B cell (primary cell): ENCODE measurements at regions of chr12 and their contacts with region 1.

Region 1: GRCh38 chr12:49776413-49776812 is 35.1 kb downstream of the TMBIM6 start:
- DNase-seq: peak; percentile 63
- ATAC-seq: peak; percentile 73
- H3K4me3 ChIP-seq: no peak overlapping the region
- H3K4me3 Mint-ChIP-seq: no peak overlapping the region
- H3K27ac ChIP-seq: no peak overlapping the region
- H3K27ac Mint-ChIP-seq: no peak overlapping the region
- H3K4me1 ChIP-seq: peaks cover 0 to 10% of the 10 kb centered on the region in 2 donors
- H3K4me1 Mint-ChIP-seq: peaks cover 11% of the 10 kb centered on the region
- H3K27me3 ChIP-seq: peaks cover 0 to 16% (median 5%) of the 10 kb centered on the region in 4 experiments
- H3K27me3 Mint-ChIP-seq: peaks cover 27% of the 10 kb centered on the region
- CTCF ChIP-seq: peak; percentile 70

Region 2: DNA sequence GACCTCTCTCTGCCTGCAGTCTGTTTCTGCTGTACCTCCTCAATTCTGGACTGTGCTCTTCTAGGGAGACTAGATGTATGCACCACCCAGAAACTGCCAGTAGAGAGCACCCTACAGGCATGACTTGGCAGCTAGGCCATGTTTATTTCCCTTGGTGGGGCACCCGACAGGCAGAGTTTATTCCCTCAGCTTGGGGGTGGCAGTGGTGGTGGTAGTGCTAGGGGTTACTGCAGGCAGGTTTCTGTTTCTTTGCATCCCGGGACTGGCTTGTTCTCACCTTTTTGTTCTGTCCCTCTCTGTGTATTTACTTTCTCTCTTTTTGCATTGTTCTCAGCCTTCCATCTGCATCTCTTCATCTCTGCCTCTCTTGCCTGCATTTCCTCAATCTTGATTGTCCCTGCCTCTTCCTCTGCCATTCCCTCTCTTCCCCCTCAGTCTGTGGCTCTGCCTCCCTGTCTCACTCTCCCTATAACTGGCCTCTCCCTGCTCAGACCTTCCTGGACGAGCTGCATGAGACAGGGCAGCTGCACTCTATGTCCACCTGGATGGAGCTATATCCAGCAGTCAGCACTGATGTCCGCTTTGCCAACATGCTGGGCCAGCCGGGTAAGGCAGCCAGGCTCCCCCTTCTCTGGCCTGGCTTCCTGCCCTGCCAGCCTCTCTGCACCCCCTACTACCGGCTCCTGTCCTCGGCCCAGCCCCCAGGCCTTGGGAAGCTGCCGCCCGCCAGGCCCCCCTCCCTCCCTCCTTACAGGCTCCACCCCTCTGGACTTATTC is 139.2 kb before region 1 on chr12:
- CTCF ChIA-PET with region 1: interaction called, 27 read pairs
- POLR2A ChIA-PET with region 1: no interaction called
- intact Hi-C with region 1: no loop called
- DNase-seq: peak; percentile 67
- ATAC-seq: peak; percentile 92
- H3K4me3 ChIP-seq: no peak overlapping the region
- H3K4me3 Mint-ChIP-seq: no peak overlapping the region
- H3K27ac ChIP-seq: no peak overlapping the region
- H3K27ac Mint-ChIP-seq: peak overlapping the region; percentile 67
- H3K4me1 ChIP-seq: peaks cover 13 to 18% of the 10 kb centered on the region in 2 donors
- H3K4me1 Mint-ChIP-seq: peaks cover 21% of the 10 kb centered on the region
- H3K27me3 ChIP-seq: no peaks in the 10 kb centered on the region
- H3K27me3 Mint-ChIP-seq: no peaks in the 10 kb centered on the region
- CTCF ChIP-seq: peak; percentile 77

Region 3: DNA sequence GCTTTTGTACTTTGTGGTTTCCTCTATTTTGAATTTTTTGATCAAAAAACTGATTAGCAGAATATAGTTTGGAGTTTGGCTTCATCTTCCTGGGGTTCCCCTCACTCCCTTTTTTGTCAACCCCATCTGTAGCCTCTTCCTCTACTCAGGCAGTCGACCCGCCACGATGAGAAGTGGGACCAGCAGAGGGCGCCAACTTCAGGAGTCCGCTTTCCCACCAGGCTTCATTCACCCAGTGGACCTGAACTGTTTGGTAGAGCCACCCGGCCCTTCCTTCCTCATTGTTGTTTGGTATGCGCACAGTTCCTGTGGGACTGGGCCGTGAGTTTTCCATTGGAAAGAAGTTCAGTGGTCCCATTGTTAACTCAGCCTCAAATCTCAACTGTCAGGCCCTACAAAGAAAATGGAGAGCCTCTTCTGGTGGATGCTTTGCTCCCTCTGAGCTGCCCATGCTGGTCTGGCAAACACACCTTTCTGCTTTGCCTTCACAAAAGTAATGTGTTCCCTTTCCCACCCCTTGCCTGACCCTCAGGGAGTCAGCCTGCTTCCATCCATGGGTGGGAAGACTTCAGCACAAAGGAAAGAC is 13.3 kb before region 1 on chr12:
- CTCF ChIA-PET with region 1: interaction called, 14 read pairs
- POLR2A ChIA-PET with region 1: no interaction called
- intact Hi-C with region 1: no loop called
- DNase-seq: peak; percentile 81
- ATAC-seq: peak; percentile 85
- H3K4me3 ChIP-seq: no peak overlapping the region
- H3K4me3 Mint-ChIP-seq: no peak overlapping the region
- H3K27ac ChIP-seq: peak overlapping the region in 1 of 2 donors; percentile 50
- H3K27ac Mint-ChIP-seq: peak overlapping the region; percentile 26
- H3K4me1 ChIP-seq: peaks cover 12 to 14% of the 10 kb centered on the region in 2 donors
- H3K4me1 Mint-ChIP-seq: peaks cover 22% of the 10 kb centered on the region
- H3K27me3 ChIP-seq: no peaks in the 10 kb centered on the region
- H3K27me3 Mint-ChIP-seq: no peaks in the 10 kb centered on the region
- CTCF ChIP-seq: peak; percentile 89

Region 4: DNA sequence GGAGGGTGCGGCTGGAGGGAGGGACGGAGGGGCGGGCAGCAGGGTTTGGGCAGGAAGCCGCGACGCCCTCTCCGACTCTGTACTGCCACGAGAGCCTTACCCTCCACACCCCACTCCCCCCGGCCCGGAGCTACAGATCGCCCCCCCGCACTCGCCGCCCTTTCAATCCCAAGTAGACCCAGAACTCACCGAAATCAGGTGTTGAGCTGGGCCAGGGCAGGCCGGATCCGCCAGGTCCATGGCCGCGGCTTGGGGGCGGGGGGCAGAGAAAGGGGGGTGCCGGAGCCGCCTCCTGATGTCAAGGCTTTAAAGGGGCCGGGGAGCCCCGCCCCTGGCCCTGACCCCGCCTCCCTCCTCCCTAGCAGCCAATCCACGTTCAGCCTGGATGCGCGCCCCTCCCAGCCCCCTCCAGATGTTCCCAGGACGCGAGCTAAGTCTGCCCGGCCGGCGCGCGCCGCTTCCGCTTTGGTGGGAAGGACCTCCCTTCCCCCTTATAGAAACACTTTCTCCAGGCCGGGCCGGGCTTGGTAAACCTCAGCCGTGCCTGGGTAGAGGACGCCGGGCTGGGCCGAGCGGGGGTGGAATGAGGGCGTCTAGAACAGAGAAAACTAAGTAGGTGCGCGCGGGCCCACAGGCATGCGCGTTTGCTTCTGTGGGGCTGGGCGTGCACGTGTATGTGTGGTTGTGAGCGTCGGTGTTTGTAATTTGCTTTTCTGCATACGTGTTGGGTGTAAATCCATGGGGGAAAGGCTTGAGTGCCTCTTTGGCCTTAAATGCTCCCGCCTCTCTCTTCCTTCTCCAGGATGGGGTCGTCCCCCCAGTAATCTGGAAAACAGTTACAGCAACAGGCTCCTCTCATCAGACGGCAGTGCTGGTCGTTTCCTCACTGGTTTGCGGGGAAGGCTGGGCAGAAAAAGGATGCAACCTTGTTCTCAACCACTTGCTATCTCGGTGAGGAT is 52.0 kb after region 1 on chr12 and contains the start of gene NCKAP5L:
- CTCF ChIA-PET with region 1: interaction called, 10 read pairs
- POLR2A ChIA-PET with region 1: no interaction called
- intact Hi-C with region 1: no loop called
- DNase-seq: peak; percentile 96
- ATAC-seq: peak; percentile 98
- H3K4me3 ChIP-seq: peak within 1 kb of the TSS; percentile 60 to 84 (median 73)
- H3K4me3 Mint-ChIP-seq: peak within 1 kb of the TSS; percentile 99
- H3K27ac ChIP-seq: peak within 1 kb of the TSS; percentile 36 to 75
- H3K27ac Mint-ChIP-seq: peak within 1 kb of the TSS; percentile 97
- H3K4me1 ChIP-seq: peaks cover 26% of the 10 kb centered on the region in 2 donors
- H3K4me1 Mint-ChIP-seq: peaks cover 39% of the 10 kb centered on the region
- H3K27me3 ChIP-seq: no peaks in the 10 kb centered on the region
- H3K27me3 Mint-ChIP-seq: no peaks in the 10 kb centered on the region
- CTCF ChIP-seq: no peak
- total RNA-seq, gene NCKAP5L: 13.2 and 13.4 TPM in 2 replicates

Region 5: GRCh38 chr12:49866859-49867579 is 90.6 kb after region 1 on chr12:
- CTCF ChIA-PET with region 1: interaction called, 13 read pairs
- POLR2A ChIA-PET with region 1: no interaction called
- intact Hi-C with region 1: no loop called
- DNase-seq: peak; percentile 79
- ATAC-seq: peak; percentile 96
- H3K4me3 ChIP-seq: no peak overlapping the region
- H3K4me3 Mint-ChIP-seq: no peak overlapping the region
- H3K27ac ChIP-seq: no peak overlapping the region
- H3K27ac Mint-ChIP-seq: no peak overlapping the region
- H3K4me1 ChIP-seq: no peaks in the 10 kb centered on the region
- H3K4me1 Mint-ChIP-seq: no peaks in the 10 kb centered on the region
- H3K27me3 ChIP-seq: no peaks in the 10 kb centered on the region
- H3K27me3 Mint-ChIP-seq: peaks cover 14% of the 10 kb centered on the region
- CTCF ChIP-seq: peak; percentile 95